OCI-LY7 (cell line): ENCODE measurements at regions of chr3 and their contacts with region 1.

Region 1: GRCh38 chr3:10173926-10174435 is 9.3 kb downstream of the IRAK2 start:
- DNase-seq: no peak
- H3K4me3 ChIP-seq: no peak overlapping the region
- H3K27ac ChIP-seq: peak overlapping the region; percentile 4
- H3K4me1 ChIP-seq: peaks cover 47% of the 10 kb centered on the region
- CTCF ChIP-seq: no peak

Region 2: DNA sequence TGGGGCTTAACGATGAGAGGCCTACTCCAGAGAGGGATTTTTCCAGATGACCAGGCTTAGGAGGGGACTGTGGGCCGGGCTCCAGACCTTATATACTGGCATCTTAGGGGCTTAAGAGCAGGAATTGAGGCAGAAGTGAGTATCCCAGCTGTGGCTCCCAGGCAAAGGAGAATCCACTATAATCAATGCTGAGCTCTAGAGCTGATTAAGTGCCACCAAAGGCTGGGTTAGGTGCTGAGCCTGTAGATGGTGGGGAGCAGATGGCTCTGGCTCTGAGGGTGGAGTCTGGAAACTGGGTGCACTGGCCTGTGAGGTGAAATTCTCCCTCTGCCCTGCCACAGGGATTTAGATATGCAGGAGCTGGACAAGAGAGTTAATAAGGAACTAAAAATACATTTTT is 14.0 kb after region 1 on chr3:
- CTCF ChIA-PET with region 1: interaction called, 4 read pairs
- POLR2A ChIA-PET with region 1: interaction called, 10 read pairs
- intact Hi-C with region 1: no loop called
- DNase-seq: no peak
- H3K4me3 ChIP-seq: no peak overlapping the region
- H3K27ac ChIP-seq: no peak overlapping the region
- H3K4me1 ChIP-seq: peaks cover 71% of the 10 kb centered on the region
- CTCF ChIP-seq: no peak

Region 3: DNA sequence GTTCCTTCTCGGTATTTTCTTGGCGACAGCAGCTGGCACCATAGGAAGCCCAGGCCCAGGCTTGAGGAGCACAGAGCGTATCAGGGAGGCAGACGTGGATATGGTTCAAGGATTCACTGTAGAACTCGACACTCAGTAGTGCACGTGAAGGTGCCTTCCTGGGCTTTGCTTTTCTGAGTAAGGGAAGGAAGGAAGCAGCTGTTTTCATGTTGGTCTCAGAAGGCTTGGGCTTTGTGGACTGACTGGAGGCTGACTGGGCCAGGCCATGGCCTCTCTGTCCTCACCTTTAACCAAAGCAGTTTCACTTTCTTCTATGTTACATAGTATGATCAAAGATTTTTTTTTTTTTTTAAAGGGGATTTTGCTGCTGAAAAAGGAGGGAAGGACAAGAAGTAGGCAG is 125.7 kb after region 1 on chr3:
- CTCF ChIA-PET with region 1: no interaction called
- POLR2A ChIA-PET with region 1: no interaction called
- intact Hi-C with region 1: no loop called
- DNase-seq: no peak
- H3K4me3 ChIP-seq: no peak overlapping the region
- H3K27ac ChIP-seq: no peak overlapping the region
- H3K4me1 ChIP-seq: no peaks in the 10 kb centered on the region
- CTCF ChIP-seq: no peak